PC-9 (cell line): ENCODE measurements at regions of chr16 and their contacts with region 1.

Region 1: GRCh38 chr16:89319883-89320781 is 102.6 kb downstream of the ZNF778 start:
- DNase-seq: peak; percentile 92 to 94
- H3K4me3 ChIP-seq: peak overlapping the region; percentile 57
- H3K27ac ChIP-seq: peak overlapping the region; percentile 80
- H3K4me1 ChIP-seq: peaks cover 98% of the 10 kb centered on the region
- H3K27me3 ChIP-seq: no peaks in the 10 kb centered on the region
- CTCF ChIP-seq: no peak; the same call in 1 of the 2 replicates

Region 2: GRCh38 chr16:89217388-89218191 is 102.5 kb before region 1 on chr16 and contains the start of gene ZNF778:
- CTCF ChIA-PET with region 1: no interaction called
- POLR2A ChIA-PET with region 1: no interaction called
- intact Hi-C with region 1: no loop called
- DNase-seq: peak; percentile 75 to 77
- H3K4me3 ChIP-seq: peak within 1 kb of the TSS; percentile 84
- H3K27ac ChIP-seq: peak within 1 kb of the TSS; percentile 53
- H3K4me1 ChIP-seq: 0 out of 2 replicates have a peak, but pooled peaks cover 5% of the 10 kb centered on the region
- H3K27me3 ChIP-seq: no peaks in the 10 kb centered on the region
- CTCF ChIP-seq: no peak
- total RNA-seq, gene ZNF778: 9.5 and 15.7 TPM in 2 replicates

Region 3: GRCh38 chr16:89363621-89364393 is 43.7 kb after region 1 on chr16:
- CTCF ChIA-PET with region 1: no interaction called
- POLR2A ChIA-PET with region 1: no interaction called
- intact Hi-C with region 1: loop called (anchors 2 kb)
- DNase-seq: peak; percentile 74 to 77
- H3K4me3 ChIP-seq: no peak overlapping the region
- H3K27ac ChIP-seq: peak overlapping the region; percentile 30; the same call in 1 of the 2 replicates
- H3K4me1 ChIP-seq: peaks cover 31% of the 10 kb centered on the region
- H3K27me3 ChIP-seq: no peaks in the 10 kb centered on the region
- CTCF ChIP-seq: no peak

Region 4: GRCh38 chr16:89502319-89502878 is 182.3 kb after region 1 on chr16:
- CTCF ChIA-PET with region 1: no interaction called
- POLR2A ChIA-PET with region 1: no interaction called
- intact Hi-C with region 1: loop called (anchors 1 kb)
- DNase-seq: peak; percentile 96 to 99
- H3K4me3 ChIP-seq: no peak overlapping the region; the same call in 1 of the 2 replicates
- H3K27ac ChIP-seq: peak overlapping the region; percentile 77
- H3K4me1 ChIP-seq: peaks cover 48% of the 10 kb centered on the region
- H3K27me3 ChIP-seq: no peaks in the 10 kb centered on the region
- CTCF ChIP-seq: no peak

Region 5: DNA sequence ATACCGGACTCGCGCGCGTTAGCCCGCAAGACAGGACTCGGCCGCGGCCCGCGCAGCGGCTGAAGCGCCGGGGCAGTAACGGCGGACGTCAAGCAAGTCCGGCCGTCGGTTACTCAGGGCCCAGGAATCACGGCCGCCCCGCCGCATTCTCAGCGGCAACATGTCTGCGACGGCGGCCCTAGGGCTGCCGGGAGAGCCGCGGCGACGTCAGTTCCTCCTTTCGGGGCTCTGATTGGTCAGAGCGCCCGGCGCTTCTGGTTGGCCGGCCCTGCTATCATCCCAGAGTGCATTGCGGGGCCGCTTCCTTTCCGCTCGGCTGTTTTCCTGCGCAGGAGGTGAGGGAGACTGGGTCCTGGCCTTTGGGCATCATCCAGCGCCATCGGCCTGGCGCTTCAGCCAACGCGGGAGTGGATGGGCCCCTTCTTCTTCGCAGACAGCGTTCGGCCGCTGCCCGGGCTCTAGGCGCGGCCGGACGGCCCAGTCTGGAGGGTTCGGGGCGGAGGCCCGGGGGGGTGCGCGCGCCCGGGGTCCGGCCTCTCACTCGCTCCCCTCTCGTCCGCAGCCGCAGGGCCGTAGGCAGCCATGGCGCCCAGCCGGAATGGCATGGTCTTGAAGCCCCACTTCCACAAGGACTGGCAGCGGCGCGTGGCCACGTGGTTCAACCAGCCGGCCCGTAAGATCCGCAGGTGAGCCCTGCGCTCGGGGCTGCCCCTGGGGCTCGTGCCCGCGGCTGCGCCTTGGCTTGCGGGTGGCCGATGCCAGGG is 240.4 kb after region 1 on chr16 and contains the start of gene RPL13:
- CTCF ChIA-PET with region 1: no interaction called
- POLR2A ChIA-PET with region 1: no interaction called
- intact Hi-C with region 1: loop called (anchors 5 kb)
- DNase-seq: peak; percentile 91 to 95
- H3K4me3 ChIP-seq: peak within 1 kb of the TSS; percentile 92
- H3K27ac ChIP-seq: peak within 1 kb of the TSS; percentile 96
- H3K4me1 ChIP-seq: peaks cover 49% of the 10 kb centered on the region
- H3K27me3 ChIP-seq: no peaks in the 10 kb centered on the region
- CTCF ChIP-seq: no peak
- total RNA-seq, gene RPL13: 2,045 and 3,124 TPM in 2 replicates

Region 6: DNA sequence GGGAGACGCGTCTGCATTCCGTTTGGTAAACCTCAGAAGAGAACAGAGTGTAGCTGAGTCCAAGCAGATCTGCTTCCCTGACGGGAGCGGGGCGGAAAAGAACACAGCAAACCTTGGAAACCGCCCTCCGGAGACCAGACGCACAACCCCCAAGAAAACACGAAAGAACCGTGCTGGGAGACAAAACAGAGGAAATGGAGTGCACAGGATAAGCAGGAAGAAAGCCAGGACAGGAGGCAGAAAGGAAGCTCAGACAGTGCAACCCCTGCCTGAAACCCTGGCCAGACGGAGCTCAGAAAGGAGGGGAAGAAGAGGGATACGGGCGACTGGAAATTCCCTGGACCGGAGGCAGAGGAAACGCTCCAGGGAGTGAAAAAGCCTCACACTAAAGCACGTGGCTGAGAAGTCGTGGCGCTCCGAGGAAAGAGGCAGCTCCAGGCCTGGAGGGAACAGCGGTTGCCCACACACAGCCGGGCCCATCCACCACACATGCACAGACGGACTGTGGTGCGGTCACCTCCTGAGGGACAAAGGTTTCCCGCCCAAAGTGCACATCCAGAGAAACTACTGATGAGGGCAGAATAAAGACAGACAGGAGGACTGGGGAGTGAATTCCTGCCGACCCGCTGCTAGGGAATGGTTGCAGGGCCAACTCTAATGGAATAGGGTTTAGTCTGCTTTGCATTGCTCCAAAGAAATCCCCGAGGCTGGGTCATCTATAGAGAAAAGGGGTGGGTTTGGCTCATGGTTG is 303.6 kb after region 1 on chr16:
- CTCF ChIA-PET with region 1: no interaction called
- POLR2A ChIA-PET with region 1: no interaction called
- intact Hi-C with region 1: no loop called
- DNase-seq: no peak
- H3K4me3 ChIP-seq: no peak overlapping the region
- H3K27ac ChIP-seq: no peak overlapping the region
- H3K4me1 ChIP-seq: no peaks in the 10 kb centered on the region
- H3K27me3 ChIP-seq: peaks cover 40% of the 10 kb centered on the region
- CTCF ChIP-seq: no peak

Region 7: GRCh38 chr16:89873972-89874689 is 554.0 kb after region 1 on chr16:
- CTCF ChIA-PET with region 1: no interaction called
- POLR2A ChIA-PET with region 1: interaction called, 10 read pairs
- intact Hi-C with region 1: no loop called
- DNase-seq: peak; percentile 71 to 96
- H3K4me3 ChIP-seq: peak overlapping the region; percentile 65
- H3K27ac ChIP-seq: peak overlapping the region; percentile 93
- H3K4me1 ChIP-seq: peaks cover 11% of the 10 kb centered on the region
- H3K27me3 ChIP-seq: no peaks in the 10 kb centered on the region
- CTCF ChIP-seq: no peak